CD4-positive, alpha-beta T cell (primary cell): ENCODE measurements at regions of chr7 and their contacts with region 1.

Region 1: DNA sequence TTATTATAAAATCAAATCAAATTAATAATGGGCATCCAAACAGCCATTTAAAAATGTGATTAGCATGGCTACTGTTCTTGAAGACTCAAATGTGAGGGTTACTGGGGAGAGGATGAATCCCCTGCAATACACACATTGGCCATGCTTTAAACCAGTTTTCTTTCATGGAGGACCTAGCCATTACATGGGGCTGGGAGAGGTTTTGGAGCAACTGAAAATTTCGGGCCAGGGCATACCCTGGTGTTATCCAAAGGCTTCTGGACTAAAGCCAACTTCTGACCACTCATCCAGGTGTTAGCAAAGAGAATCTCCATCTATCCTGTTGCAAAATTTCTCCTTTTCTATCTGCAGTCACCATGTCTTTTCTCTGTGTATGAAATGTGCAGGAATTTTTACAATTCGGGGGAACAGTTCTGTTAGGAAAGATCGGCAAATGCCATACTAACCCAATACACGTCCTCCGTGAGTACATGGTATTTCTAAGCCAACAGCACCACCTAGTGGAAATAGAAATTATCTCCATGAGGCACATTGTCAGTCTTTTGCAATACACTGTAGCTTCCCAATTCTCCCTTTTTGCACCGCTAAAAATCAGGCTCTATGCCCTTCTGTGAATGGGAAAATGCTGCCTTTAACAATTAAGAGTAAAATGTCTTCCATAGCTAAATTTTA is 47.0 kb upstream of the ZNF107 start:
- DNase-seq: peak in 5 of 14 experiments; percentile 1 to 76 (median 60)
- ATAC-seq: no peak
- H3K4me3 ChIP-seq: no peak overlapping the region
- H3K4me3 Mint-ChIP-seq: no peak overlapping the region
- H3K27ac ChIP-seq: no peak overlapping the region
- H3K27ac Mint-ChIP-seq: no peak overlapping the region
- H3K4me1 ChIP-seq: no peaks in the 10 kb centered on the region
- H3K4me1 Mint-ChIP-seq: no peaks in the 10 kb centered on the region
- H3K27me3 ChIP-seq: no peaks in the 10 kb centered on the region
- H3K27me3 Mint-ChIP-seq: no peaks in the 10 kb centered on the region
- CTCF ChIP-seq: peak; percentile 75

Region 2: DNA sequence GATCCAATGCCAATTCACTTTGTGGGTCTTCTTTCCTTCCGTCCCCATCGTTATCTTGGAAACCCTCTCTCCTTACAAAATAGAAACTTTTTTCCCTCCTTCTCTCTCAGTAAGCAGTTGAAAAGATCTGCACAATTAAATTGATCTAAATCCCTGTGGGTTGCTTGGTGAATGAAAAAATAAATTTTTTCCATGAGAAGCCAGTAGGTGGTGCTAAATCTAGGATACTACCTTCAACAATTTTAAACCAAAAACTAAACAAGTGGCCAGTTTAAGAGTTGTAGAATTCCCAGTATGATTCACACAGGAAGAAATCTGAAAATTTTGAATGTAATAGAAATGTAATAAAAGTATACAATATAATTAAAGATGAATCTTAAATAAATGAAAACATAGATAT is 1610.6 kb before region 1 on chr7:
- CTCF ChIA-PET with region 1: no interaction called
- POLR2A ChIA-PET with region 1: no interaction called
- intact Hi-C with region 1: loop called in 1 of 2 experiments (anchors 10 kb)
- DNase-seq: no peak
- ATAC-seq: no peak
- H3K4me3 ChIP-seq: no peak overlapping the region
- H3K4me3 Mint-ChIP-seq: no peak overlapping the region
- H3K27ac ChIP-seq: no peak overlapping the region
- H3K27ac Mint-ChIP-seq: no peak overlapping the region
- H3K4me1 ChIP-seq: no peaks in the 10 kb centered on the region
- H3K4me1 Mint-ChIP-seq: no peaks in the 10 kb centered on the region
- H3K27me3 ChIP-seq: no peaks in the 10 kb centered on the region
- H3K27me3 Mint-ChIP-seq: no peaks in the 10 kb centered on the region
- CTCF ChIP-seq: no peak

Region 3: DNA sequence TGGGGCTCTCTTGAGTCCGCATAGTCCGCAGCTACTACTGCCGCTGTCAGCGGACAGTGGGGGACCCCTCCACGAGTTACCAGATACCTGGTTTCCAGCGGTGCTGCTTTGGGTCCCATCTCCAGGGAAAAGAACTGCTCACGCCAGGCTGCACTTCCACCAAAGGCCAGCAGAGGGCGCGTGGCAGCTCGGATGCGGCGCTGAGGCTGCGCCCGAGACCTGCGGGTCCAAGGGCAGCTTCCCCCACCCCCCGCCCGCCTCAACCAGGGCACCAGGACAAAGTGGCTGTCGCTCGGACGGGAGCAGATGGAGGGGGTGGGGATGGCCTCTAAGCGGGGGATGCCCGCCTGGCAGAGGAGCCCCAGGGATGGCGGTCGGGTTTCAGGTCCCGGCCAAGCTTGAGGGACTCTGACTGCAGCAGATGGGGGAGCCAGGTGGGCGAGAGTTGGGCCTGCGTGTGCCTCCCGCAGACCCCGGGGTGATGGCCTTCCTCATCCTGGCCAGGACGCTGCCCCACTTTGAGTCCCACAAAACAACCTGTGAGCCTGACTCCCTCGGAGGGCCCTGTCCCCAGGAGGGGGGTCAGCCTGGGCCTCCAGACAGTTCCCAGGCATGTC is 435.7 kb before region 1 on chr7:
- CTCF ChIA-PET with region 1: interaction called, 3 read pairs
- POLR2A ChIA-PET with region 1: no interaction called
- intact Hi-C with region 1: loop called (anchors 1 to 2 kb)
- DNase-seq: peak in 12 of 14 experiments; percentile 21 to 65 (median 30)
- ATAC-seq: no peak
- H3K4me3 ChIP-seq: no peak overlapping the region
- H3K4me3 Mint-ChIP-seq: no peak overlapping the region
- H3K27ac ChIP-seq: no peak overlapping the region
- H3K27ac Mint-ChIP-seq: no peak overlapping the region
- H3K4me1 ChIP-seq: peaks cover 7% of the 10 kb centered on the region
- H3K4me1 Mint-ChIP-seq: no peaks in the 10 kb centered on the region
- H3K27me3 ChIP-seq: peaks cover 0 to 4% of the 10 kb centered on the region in 2 experiments
- H3K27me3 Mint-ChIP-seq: peaks cover 14% of the 10 kb centered on the region
- CTCF ChIP-seq: peak; percentile 61